ENCODE measurements at regions of chr15 and their contacts with region 1.

Region 1: GRCh38 chr15:39801641-39802309 is 19.1 kb upstream of the FSIP1 start:
- DNase-seq: peak; percentile 42
- ATAC-seq: no peak
- H3K4me3 Mint-ChIP-seq: no peak overlapping the region
- H3K27ac Mint-ChIP-seq: no peak overlapping the region
- H3K4me1 Mint-ChIP-seq: no peaks in the 10 kb centered on the region
- H3K27me3 Mint-ChIP-seq: peaks cover 5% of the 10 kb centered on the region

Region 2: GRCh38 chr15:39874890-39875549 is 73.2 kb after region 1 on chr15:
- CTCF ChIA-PET with region 1: interaction called, 4 read pairs
- POLR2A ChIA-PET with region 1: no interaction called
- intact Hi-C with region 1: loop called in 1 of 2 experiments (anchors 1 kb)
- DNase-seq: peak; percentile 48
- ATAC-seq: no peak
- H3K4me3 Mint-ChIP-seq: no peak overlapping the region
- H3K27ac Mint-ChIP-seq: no peak overlapping the region
- H3K4me1 Mint-ChIP-seq: peaks cover 10% of the 10 kb centered on the region
- H3K27me3 Mint-ChIP-seq: peaks cover 2% of the 10 kb centered on the region

Measured in activated CD4-positive, alpha-beta T cell treated with anti-CD3 and anti-CD28 coated beads for 36 hours (primary cell).